ENCODE measurements at regions of chr16 and their contacts with region 1.

Region 1: DNA sequence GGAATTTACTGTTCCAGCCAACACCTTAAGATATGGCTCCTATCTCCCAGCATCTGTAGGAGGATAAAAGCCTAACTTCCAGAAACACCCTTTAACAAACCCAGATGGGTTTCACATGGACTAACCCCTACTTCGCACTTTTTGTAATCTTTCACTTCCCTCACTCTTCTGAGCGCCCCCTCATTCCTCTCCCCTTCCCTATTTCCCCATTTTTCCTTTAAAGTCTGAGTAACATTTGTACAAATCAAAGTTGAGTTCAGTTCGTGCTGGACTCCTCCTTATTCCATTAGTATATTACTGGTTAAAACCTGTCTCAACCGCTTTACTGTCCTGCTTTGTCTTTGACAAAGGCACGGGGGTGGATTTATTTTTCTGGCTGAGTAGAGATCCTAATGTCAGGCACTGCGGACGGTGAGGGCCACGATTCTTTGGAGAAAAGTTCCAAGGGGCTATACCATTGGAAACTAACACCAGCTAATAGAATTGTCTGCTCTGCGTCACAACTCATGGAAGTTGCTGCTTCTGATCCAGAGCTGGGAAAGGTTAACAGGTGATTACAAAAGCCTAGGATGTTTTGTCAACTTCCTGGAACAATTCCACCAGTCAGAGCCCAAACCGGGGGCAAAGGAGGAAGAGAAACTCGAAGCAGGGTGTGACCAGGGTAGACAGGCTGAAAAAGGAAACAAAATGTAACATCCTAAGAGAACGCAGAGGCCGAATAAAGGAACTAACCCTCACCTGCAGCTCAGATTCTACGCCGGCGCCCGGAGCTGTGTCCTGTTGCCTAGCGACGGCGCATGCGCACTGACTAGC is 12.5 kb downstream of the TAT start:
- DNase-seq: no peak
- H3K4me3 Mint-ChIP-seq: peak overlapping the region; percentile 89
- H3K27ac Mint-ChIP-seq: peak overlapping the region; percentile 90
- H3K4me1 Mint-ChIP-seq: peaks cover 11% of the 10 kb centered on the region
- H3K27me3 Mint-ChIP-seq: peaks cover 3% of the 10 kb centered on the region

Region 2: DNA sequence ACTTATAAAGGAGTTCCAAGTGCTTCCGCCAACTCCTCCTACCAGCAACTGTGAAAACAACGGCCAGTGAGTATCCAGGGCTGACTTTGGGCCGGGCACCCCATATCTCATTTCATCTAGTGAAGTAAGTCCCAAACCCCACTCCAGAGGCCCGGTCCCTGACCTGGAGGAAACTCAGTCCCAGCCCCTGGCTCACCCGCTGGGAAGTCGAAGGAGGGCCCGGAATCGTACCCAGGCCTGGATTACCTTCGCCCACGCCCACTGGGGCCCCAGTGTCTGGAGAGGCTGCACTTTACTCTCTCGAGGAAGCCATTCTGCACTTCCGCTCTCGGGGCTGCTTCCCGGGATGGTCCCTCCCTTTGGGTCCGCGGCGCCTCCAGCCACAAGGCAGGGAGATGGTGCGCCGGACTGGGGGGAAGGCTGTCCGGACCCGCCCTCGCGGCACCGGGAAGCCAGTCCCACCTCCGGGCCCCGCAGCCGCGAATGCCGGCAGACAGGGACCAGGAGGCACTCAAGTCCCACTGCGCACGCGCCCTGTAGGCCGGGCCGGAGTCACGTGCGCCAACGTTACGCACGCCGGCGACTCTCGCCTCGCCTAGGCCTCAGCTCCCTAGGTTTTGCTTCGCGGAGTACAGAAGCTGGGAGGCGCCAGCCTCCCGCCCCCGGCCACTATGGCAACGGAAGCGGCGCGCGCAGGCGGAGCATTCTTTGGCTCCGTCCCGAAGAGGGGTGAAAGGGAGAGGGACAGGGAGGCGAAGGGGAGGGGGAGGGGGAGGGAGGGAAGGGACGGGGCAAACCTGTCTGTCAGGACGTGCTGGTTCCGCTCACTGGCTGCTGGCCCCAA is 275.2 kb before region 1 on chr16 and contains the start of gene CMTR2:
- intact Hi-C with region 1: loop called (anchors 2 kb)
- DNase-seq: peak; percentile 88
- H3K4me3 Mint-ChIP-seq: peak within 1 kb of the TSS; percentile 88
- H3K27ac Mint-ChIP-seq: peak within 1 kb of the TSS; percentile 84
- H3K4me1 Mint-ChIP-seq: peaks cover 19% of the 10 kb centered on the region
- H3K27me3 Mint-ChIP-seq: peaks cover 13% of the 10 kb centered on the region
- total RNA-seq, gene CMTR2: 17.1 and 19.6 TPM in 2 replicates

Region 3: DNA sequence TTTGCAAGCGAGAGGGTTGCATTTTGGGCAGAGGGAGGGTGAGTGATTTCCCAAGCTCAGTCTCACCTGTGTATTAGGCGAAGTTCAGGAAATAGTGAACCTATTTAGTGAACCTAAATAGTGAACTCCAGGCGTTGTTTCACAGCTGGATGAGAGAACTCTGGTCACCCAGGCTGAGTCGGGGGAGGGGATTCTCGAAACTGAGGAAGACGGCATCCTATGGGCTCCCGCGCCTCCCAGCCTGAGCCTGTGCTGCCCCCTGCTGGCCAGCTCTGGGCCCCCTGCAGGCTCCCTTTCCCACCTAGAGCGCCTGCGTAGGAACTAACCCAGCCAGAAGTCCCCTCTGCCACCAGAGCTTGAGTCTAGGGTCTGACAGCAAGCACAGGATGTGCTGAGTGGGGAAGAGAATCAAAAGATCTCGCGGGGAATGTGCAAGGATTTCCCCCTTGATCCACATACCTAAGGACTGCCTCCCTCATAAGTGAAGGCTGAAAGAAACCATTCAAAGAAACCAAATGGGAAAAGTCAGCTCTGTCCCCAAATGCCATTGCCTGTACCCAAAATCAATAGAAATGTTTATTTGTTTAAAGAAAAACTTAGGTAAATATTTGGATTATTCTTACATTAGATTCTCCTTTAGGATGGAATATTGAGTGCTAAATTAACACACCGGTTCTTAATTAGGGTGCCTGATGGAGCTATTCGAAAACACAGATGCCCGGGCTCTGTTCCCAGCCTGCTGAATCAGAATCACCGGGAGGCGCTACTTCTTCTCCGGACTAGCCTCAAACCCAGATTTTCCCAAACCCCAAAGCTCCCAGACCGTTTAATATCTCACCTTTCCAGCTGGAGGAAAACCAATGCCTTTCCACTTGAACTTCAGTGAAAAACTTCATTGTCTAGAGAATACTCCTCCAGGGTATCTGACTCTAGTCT is 46.8 kb after region 1 on chr16:
- intact Hi-C with region 1: loop called (anchors 2 kb)
- DNase-seq: peak; percentile 59
- H3K4me3 Mint-ChIP-seq: no peak overlapping the region
- H3K27ac Mint-ChIP-seq: no peak overlapping the region
- H3K4me1 Mint-ChIP-seq: no peaks in the 10 kb centered on the region
- H3K27me3 Mint-ChIP-seq: peaks cover 15% of the 10 kb centered on the region

Measured in activated T-helper 2 cell treated with anti-CD3 and anti-CD28 coated beads, Interferon-gamma antibody, Interleukin-2, Interleukin-4, amounts not matched to agents 10 μg/mL and 5 μg/mL and 100 μg/mL, durations not matched to agents 14 hours and 24 hours and 36 hours (primary cell).